Activated B cell treated with CpG ODN at 0.5 μM for 24 hours (primary cell): ENCODE measurements at regions of chr4 and their contacts with region 1.

Region 1: GRCh38 chr4:77843628-77844027 is 19.0 kb upstream of the MRPL1 start:
- DNase-seq: no peak
- ATAC-seq: no peak
- H3K4me3 Mint-ChIP-seq: no peak overlapping the region
- H3K27ac Mint-ChIP-seq: no peak overlapping the region
- H3K4me1 Mint-ChIP-seq: no peaks in the 10 kb centered on the region
- H3K27me3 Mint-ChIP-seq: no peaks in the 10 kb centered on the region
- CTCF ChIP-seq: no peak

Region 2: GRCh38 chr4:77827343-77827742 is 16.3 kb before region 1 on chr4:
- CTCF ChIA-PET with region 1: no interaction called
- POLR2A ChIA-PET with region 1: no interaction called
- intact Hi-C with region 1: loop called (anchors 2 kb)
- DNase-seq: no peak
- ATAC-seq: peak; percentile 49
- H3K4me3 Mint-ChIP-seq: peak overlapping the region; percentile 46
- H3K27ac Mint-ChIP-seq: peak overlapping the region; percentile 57
- H3K4me1 Mint-ChIP-seq: peaks cover 41% of the 10 kb centered on the region
- H3K27me3 Mint-ChIP-seq: no peaks in the 10 kb centered on the region
- CTCF ChIP-seq: no peak

Region 3: GRCh38 chr4:77862478-77863216 is 19.0 kb after region 1 on chr4 and contains the start of gene MRPL1:
- CTCF ChIA-PET with region 1: no interaction called
- POLR2A ChIA-PET with region 1: no interaction called
- intact Hi-C with region 1: no loop called
- DNase-seq: peak; percentile 72
- ATAC-seq: peak; percentile 86
- H3K4me3 Mint-ChIP-seq: peak within 1 kb of the TSS; percentile 97
- H3K27ac Mint-ChIP-seq: peak within 1 kb of the TSS; percentile 100
- H3K4me1 Mint-ChIP-seq: peaks cover 47% of the 10 kb centered on the region
- H3K27me3 Mint-ChIP-seq: no peaks in the 10 kb centered on the region
- CTCF ChIP-seq: no peak
- total RNA-seq, gene MRPL1: 31.7 and 38.3 TPM in 2 replicates